Activated T-helper 1 cell treated with anti-CD3 and anti-CD28 coated beads, Interleukin-12 subunit alpha, Interleukin-12 subunit beta, Interleukin-2, Interleukin-4 antibody, amounts not matched to agents 30 ng/mL and 10 ng/mL and 1 ng/mL, durations not matched to agents 14 hours and 24 hours and 36 hours (primary cell): ENCODE measurements at regions of chr6 and their contacts with region 1.

Region 1: DNA sequence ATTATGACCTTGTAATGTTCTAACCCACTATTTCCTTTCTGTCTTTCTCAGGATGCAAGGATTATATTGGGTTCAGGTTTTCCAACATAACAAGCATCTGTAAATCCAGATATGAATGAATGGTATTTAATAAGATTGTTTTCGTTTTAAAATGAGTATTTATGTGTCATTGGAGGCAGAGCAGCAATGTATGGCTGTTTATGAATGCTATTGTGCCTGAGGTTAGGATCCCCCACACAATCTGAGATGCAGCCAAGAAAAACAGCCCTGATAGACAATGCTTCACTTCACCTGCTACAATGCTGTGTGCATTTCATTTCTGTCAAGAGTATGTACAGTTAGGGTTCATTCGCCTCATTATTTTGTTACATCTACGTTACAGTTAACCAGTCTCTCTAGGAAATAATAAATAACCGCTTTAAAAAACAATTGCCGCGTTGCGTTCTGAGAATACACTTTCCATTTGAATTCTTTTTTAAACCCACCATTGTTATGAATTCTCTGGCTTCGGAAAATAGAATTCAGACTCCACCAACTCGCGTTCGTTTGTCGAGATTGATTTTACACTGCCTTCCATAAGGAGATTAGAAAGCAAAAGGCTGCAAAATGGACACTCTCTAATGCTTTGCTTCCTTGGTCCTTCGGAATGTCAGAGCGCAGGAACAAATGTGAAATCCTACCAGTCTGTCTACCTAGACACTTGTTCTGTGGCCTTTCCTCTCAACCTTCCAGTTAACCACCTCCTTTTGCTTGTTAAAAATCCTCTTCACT is 19.5 kb downstream of the TFAP2A start:
- DNase-seq: no peak
- H3K4me3 Mint-ChIP-seq: no peak overlapping the region
- H3K27ac Mint-ChIP-seq: no peak overlapping the region
- H3K4me1 Mint-ChIP-seq: no peaks in the 10 kb centered on the region
- H3K27me3 Mint-ChIP-seq: peaks cover 84% of the 10 kb centered on the region

Region 2: DNA sequence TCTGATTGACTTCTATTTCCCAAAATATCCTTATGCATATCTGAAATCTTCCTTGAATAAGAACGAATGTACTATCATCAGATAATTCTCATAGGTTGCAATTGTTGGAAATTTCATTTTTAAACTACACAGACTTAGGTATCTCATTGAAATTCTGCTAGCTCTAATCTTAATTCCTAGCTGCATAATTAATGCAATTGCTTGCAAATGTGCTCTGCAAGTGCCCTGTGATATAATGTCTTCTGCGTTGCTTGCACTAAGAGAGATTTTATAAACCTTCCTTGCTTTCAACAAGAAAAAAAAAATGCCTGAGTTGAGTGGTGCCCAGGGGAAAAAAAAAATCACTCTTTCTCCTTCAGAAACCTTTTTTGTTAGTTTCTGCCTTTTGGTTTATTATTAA is 335.4 kb before region 1 on chr6:
- intact Hi-C with region 1: no loop called
- DNase-seq: no peak
- H3K4me3 Mint-ChIP-seq: no peak overlapping the region
- H3K27ac Mint-ChIP-seq: no peak overlapping the region
- H3K4me1 Mint-ChIP-seq: no peaks in the 10 kb centered on the region
- H3K27me3 Mint-ChIP-seq: peaks cover 2% of the 10 kb centered on the region

Region 3: DNA sequence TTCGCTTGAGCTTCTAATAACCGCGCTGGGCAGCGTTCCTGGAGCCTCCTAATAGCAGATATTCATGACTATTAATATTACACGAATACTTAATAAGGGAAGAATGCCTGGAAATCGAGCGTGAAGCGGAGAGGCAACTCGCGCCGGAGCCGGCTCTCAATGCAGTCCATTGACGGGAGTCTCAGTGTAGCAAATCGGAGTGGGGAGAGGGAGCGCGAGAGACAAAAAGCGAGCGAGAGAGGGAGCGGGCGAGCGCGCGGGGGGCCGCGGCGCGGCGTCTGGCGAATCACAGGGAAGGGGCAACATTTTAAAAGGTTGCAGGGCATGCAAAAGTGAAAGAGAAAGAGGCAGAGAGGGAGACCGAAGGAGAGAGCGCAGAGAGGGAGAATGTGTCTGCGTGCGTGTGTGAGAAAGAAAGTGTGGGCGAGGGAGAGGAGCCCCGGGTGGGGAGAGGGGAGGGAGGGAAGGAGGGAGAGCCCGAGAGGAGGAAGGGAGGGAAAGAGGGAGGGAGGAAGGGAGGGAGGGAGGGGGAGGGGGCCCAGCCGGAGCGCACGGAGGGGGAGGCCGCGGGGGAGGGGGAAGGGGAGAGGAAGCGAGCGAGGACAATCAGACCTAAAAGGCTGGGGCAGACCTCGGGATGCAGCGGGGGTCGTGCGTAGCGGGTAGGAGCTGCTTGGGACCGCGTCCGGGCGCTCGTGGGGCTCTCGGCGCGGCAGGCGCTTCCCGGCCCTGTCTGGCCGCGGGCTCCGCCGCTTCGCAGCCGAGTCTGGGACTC is 16.8 kb after region 1 on chr6:
- intact Hi-C with region 1: loop called (anchors 1 kb)
- DNase-seq: peak; percentile 38
- H3K4me3 Mint-ChIP-seq: peak overlapping the region; percentile 80
- H3K27ac Mint-ChIP-seq: peak overlapping the region; percentile 42
- H3K4me1 Mint-ChIP-seq: peaks cover 42% of the 10 kb centered on the region
- H3K27me3 Mint-ChIP-seq: peaks cover 91% of the 10 kb centered on the region

Region 4: DNA sequence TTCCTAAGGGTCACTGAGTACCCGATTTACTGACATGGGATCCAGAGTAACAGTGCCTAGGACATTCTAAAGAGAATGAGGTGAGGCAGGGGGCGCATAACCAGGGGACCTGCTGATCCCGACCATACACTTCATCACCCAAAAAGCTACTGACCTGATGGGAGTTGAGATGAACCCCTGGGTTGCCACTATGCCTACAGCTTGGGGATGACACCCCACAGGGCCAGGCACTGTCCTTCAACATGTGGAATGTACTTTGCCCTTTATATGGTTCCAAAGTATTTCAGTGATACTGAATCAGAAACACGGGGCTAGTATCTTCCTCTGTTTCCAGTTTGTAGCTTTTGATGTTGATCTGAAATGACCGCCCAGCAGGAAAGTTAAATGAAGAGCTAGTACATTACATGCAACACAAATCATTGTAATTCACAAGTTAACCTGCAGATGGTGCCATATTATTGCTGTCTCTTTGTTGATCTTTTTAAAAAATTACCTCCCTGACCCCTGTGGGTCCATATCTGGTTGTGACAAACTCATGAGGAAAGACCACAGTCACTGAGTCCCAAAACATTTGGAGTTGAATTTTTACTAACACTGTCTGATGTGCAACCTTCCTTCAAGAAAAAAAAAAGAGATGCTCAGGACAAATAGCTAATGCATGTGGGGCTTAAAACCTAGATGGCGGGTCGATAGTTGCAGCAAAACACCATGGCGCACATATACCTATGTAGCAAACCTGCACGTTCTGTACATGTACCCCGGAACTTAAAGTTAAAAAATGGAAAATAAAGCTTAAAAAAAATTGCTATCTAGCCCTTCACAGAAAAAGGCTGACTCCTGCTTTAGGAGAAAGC is 83.1 kb after region 1 on chr6:
- intact Hi-C with region 1: no loop called
- DNase-seq: no peak
- H3K4me3 Mint-ChIP-seq: no peak overlapping the region
- H3K27ac Mint-ChIP-seq: no peak overlapping the region
- H3K4me1 Mint-ChIP-seq: no peaks in the 10 kb centered on the region
- H3K27me3 Mint-ChIP-seq: peaks cover 13% of the 10 kb centered on the region